ENCODE measurements at regions of chr1 and their contacts with region 1.

Region 1: DNA sequence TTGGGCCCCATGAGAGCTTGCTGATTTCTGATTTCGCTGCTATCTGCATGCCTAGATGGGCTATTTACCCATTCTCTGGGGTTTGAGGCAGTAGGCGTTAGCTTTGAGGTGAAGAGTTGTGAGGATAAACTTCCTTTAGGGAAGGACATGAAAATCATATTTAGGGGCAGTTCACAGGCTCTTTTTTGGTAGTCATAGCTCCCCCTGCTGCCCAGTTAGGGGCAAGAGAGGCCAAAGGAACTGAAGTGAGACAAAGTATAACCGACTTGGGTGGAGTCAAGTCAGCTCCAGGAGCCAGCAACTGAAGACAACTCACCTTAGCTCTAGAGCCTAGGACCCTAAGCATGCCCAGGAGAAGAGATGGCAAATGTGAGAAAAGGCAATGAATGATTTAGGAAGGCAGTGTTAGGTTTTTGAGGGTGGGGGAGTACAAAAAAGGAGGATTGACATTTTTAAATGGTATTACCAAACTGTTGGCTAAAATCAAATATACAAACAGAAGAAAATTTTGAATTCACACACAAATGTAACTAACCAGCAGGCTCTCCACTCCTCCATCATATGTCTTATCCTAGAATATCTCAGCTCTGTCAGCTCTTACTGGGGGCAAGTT is 625.2 kb downstream of the LMO4 start:
- DNase-seq: peak; percentile 85
- H3K4me3 Mint-ChIP-seq: no peak overlapping the region
- H3K27ac Mint-ChIP-seq: no peak overlapping the region
- H3K4me1 Mint-ChIP-seq: peaks cover 16% of the 10 kb centered on the region
- H3K27me3 Mint-ChIP-seq: no peaks in the 10 kb centered on the region
- CTCF ChIP-seq: peak; percentile 57

Region 2: DNA sequence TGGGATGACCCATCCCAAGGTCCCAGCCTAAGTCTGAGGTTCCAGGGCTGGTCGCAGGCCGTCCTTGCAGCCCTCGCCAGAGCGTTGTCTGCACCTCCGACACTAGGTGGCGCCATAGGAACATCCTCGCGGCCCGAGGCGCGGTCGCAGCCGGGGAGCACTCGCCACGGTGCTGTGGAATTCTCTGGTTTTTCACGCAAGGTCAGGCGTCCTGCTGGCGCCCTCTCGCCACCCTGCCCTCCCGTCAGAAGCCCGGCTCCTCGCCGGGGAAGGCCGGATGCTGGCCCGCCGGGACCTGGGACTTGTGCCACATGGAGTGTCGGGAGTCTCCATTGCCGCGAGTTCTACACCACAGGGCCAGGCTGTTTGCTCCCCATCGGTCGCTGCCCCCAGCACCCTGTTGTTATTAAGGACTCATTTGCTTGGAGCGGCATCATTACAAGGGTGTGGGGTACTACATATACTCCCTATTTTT is 822.0 kb before region 1 on chr1:
- CTCF ChIA-PET with region 1: interaction called, 9 read pairs
- POLR2A ChIA-PET with region 1: no interaction called
- intact Hi-C with region 1: loop called (anchors 1 kb)
- DNase-seq: peak; percentile 72
- H3K4me3 Mint-ChIP-seq: peak overlapping the region; percentile 66
- H3K27ac Mint-ChIP-seq: no peak overlapping the region
- H3K4me1 Mint-ChIP-seq: peaks cover 5% of the 10 kb centered on the region
- H3K27me3 Mint-ChIP-seq: no peaks in the 10 kb centered on the region
- CTCF ChIP-seq: peak; percentile 91

Region 3: DNA sequence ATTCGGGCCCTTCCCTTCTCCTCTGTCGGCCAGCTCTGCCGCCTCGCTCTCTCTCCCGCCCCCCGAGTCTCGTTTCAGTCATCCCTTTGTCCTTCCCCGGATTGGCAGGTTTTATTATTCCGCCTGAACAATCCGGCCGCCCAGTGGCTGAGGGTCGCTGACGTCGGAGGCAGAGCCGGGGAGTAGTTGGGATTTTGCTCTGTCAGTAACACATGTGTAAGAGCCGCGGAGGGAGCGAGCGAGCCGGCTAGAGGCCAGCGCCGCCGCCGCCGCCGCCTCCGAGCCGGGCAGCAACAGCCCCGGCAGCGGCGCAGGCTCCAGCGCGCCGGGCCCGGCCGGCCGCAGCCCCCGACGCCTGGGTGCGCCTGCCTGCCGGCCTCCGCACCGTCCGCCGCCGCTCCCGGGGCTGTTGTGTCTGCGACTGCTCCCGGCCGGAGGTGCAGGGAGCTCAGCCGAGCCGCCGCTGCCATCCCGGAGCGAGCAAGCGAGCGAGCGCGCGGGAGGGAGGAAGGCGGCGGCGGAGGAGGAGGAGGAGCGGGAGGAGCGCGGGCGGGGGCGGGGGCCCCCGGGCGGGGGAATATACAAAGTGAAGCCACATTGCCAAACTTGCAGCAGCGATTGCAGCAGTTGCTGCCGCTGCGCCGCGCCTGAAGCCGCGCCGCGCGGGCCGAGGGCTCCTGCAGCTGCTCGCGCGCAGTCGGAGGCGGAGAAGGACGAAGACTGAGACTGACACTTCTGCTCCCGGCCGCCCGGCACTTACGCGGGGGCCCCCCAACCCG is 625.4 kb before region 1 on chr1 and contains the start of gene LMO4:
- CTCF ChIA-PET with region 1: interaction called, 68 read pairs
- POLR2A ChIA-PET with region 1: interaction called, 12 read pairs
- intact Hi-C with region 1: loop called (anchors 1 kb)
- DNase-seq: peak; percentile 98
- H3K4me3 Mint-ChIP-seq: peak within 1 kb of the TSS; percentile 87
- H3K27ac Mint-ChIP-seq: peak within 1 kb of the TSS; percentile 88
- H3K4me1 Mint-ChIP-seq: peaks cover 21% of the 10 kb centered on the region
- H3K27me3 Mint-ChIP-seq: no peaks in the 10 kb centered on the region
- CTCF ChIP-seq: no peak
- total RNA-seq, gene LMO4: 23.4 and 29.4 TPM in 2 replicates

Region 4: DNA sequence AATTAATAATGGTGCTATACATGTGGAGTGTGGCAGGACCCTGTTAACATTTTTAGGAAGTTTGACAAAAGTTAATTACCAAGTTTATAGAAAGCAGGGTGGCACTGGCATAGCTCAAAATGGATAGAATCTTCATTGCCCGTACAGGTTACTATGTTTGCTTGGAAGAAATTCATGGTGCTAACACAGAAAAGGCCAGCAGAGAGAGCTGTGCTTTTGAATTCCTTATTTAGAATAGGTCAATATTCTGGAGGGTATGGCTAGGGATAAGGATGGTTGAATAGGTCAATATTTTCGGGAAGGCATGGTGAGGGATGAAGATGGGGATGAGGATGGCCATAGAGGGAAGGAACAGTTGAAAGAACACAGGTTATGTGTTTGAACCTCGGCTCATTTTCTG is 280.1 kb before region 1 on chr1:
- CTCF ChIA-PET with region 1: interaction called, 13 read pairs
- POLR2A ChIA-PET with region 1: no interaction called
- intact Hi-C with region 1: loop called (anchors 5 kb)
- DNase-seq: no peak
- H3K4me3 Mint-ChIP-seq: no peak overlapping the region
- H3K27ac Mint-ChIP-seq: no peak overlapping the region
- H3K4me1 Mint-ChIP-seq: no peaks in the 10 kb centered on the region
- H3K27me3 Mint-ChIP-seq: no peaks in the 10 kb centered on the region
- CTCF ChIP-seq: no peak

Region 5: DNA sequence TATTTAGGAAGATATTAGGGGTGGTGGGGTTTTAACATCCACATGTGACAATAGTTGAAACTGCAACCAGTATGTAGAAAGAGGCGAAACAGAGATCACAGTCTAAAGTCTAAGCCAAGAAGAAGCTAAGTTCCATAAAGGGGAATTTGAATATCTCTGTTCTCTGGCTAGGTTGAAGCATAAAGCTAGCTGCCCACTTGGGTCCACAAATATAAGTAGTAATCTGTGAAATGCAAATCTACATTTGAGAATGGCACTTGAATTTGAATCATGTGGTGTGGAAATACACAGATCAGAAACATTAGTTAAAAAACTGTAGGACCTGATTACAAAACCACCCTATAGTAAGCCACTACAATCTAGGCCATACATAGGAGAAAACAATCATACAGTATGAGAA is 23.0 kb before region 1 on chr1:
- CTCF ChIA-PET with region 1: interaction called, 18 read pairs
- POLR2A ChIA-PET with region 1: interaction called, 3 read pairs
- intact Hi-C with region 1: no loop called
- DNase-seq: no peak
- H3K4me3 Mint-ChIP-seq: no peak overlapping the region
- H3K27ac Mint-ChIP-seq: no peak overlapping the region
- H3K4me1 Mint-ChIP-seq: no peaks in the 10 kb centered on the region
- H3K27me3 Mint-ChIP-seq: no peaks in the 10 kb centered on the region
- CTCF ChIP-seq: no peak

Region 6: DNA sequence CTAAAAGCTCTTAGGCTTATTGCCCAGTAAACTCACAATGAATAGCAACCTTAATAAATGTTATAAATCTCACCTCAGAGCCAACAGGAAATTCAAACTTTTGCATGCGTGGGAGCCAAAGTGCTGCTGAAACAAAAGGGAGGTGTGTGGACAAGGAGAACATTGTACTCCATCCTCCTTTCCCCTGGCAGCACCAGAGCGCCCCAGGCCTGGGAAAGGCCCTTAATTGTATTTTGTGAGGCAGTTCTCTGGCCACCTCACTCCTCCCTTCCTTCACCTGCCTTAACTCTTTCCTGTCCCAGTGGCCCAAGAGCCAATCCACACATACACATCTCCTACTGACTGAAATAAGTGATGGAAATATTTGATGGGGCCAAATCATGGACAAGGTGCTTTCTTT is 23.3 kb after region 1 on chr1:
- CTCF ChIA-PET with region 1: interaction called, 11 read pairs
- POLR2A ChIA-PET with region 1: no interaction called
- intact Hi-C with region 1: no loop called
- DNase-seq: no peak
- H3K4me3 Mint-ChIP-seq: no peak overlapping the region
- H3K27ac Mint-ChIP-seq: no peak overlapping the region
- H3K4me1 Mint-ChIP-seq: peaks cover 10% of the 10 kb centered on the region
- H3K27me3 Mint-ChIP-seq: no peaks in the 10 kb centered on the region
- CTCF ChIP-seq: no peak

Region 7: GRCh38 chr1:88736639-88737248 is 782.9 kb after region 1 on chr1:
- CTCF ChIA-PET with region 1: no interaction called
- POLR2A ChIA-PET with region 1: no interaction called
- intact Hi-C with region 1: no loop called
- DNase-seq: peak; percentile 60
- H3K4me3 Mint-ChIP-seq: no peak overlapping the region
- H3K27ac Mint-ChIP-seq: no peak overlapping the region
- H3K4me1 Mint-ChIP-seq: no peaks in the 10 kb centered on the region
- H3K27me3 Mint-ChIP-seq: no peaks in the 10 kb centered on the region
- CTCF ChIP-seq: peak; percentile 83